ENCODE measurements at regions of chr1 and their contacts with region 1.

Region 1: DNA sequence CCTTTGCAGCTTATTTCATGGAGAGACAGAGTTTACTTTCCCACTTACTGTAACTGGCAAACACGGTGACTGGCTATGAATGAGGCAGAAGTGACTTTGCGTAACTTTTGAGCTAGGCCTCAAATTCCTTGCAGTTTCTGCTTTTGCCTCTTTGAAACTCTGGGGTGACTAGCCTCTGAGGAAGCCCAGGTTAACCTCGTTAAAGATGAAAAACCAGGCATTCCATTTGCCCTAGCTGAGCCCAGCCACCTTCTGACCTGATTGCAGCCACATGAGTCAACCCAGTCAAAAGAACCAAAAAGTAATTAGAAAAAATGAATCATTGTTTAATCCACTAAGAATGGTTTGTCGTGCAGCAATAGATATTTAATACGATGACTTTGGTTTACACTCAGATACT is 20.4 kb downstream of the PRMT6 start:
- DNase-seq: peak; percentile 94
- H3K4me3 ChIP-seq: no peak overlapping the region
- H3K27ac ChIP-seq: peak overlapping the region; percentile 29
- H3K4me1 ChIP-seq: peaks cover 7% of the 10 kb centered on the region
- H3K27me3 ChIP-seq: peaks cover 2% of the 10 kb centered on the region
- CTCF ChIP-seq: no peak

Region 2: DNA sequence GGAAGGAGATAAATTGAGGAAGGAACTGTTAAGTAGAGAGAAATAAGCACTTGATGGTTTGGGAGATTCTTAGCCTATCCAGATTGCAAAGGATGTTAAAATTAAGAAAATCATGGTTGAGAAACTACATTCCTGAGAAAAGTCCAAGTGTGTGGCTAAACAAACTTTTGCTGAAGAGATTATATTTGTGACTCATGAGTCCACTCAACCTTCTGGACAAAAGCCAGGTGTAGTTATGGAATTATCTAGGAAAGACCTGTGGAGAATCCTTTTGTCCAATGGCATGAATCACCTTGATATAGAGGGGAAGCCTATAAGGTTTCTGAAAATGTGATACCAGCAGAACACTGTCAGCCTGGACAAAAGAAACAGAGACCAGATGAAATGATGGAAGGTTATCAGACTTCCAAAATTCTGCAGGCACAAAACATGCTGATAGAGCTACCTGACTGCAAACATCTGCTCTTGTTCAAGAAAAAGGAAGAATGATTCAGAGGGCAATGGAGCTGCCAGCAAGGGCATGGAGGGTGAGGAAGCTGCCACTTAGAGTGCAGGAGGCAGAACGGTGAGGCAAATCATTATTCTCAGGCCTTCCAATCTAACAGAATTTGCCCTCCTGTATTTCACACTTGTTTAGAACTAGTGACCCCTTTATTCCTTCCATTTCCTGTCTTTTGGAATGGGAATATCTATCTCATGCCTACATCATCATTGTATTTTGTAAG is 321.0 kb before region 1 on chr1:
- CTCF ChIA-PET with region 1: no interaction called
- dilution Hi-C with region 1: no loop called
- in situ Hi-C with region 1: no loop called
- intact Hi-C with region 1: no loop called
- DNase-seq: peak; percentile 71
- H3K4me3 ChIP-seq: no peak overlapping the region
- H3K27ac ChIP-seq: no peak overlapping the region
- H3K4me1 ChIP-seq: peaks cover 7% of the 10 kb centered on the region
- H3K27me3 ChIP-seq: peaks cover 4% of the 10 kb centered on the region
- CTCF ChIP-seq: no peak

Region 3: DNA sequence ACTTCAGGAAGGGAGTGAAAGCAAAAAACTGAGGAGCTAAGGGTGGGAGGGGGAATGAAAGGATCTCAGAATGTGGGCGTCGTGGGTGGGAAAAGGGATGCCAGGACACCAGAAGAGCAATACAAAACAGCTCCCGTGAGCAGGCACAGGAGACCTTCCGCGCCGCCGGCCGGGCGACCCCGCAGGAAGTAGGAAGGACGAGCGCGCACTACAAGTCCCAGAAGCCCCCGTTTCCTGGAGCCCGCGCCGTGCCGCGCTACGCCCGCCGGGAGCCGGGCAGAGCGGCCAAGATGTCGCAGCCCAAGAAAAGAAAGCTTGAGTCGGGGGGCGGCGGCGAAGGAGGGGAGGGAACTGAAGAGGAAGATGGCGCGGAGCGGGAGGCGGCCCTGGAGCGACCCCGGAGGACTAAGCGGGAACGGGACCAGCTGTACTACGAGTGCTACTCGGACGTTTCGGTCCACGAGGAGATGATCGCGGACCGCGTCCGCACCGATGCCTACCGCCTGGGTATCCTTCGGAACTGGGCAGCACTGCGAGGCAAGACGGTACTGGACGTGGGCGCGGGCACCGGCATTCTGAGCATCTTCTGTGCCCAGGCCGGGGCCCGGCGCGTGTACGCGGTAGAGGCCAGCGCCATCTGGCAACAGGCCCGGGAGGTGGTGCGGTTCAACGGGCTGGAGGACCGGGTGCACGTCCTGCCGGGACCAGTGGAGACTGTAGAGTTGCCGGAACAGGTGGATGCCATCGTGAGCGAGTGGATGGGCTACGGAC is 20.2 kb before region 1 on chr1 and contains the start of gene PRMT6:
- CTCF ChIA-PET with region 1: interaction called, 4 read pairs
- dilution Hi-C with region 1: no loop called
- in situ Hi-C with region 1: no loop called
- intact Hi-C with region 1: loop called (anchors 2 kb)
- DNase-seq: peak; percentile 69
- H3K4me3 ChIP-seq: peak within 1 kb of the TSS; percentile 87 to 99 (median 96)
- H3K27ac ChIP-seq: peak within 1 kb of the TSS; percentile 61
- H3K4me1 ChIP-seq: peaks cover 9% of the 10 kb centered on the region
- H3K27me3 ChIP-seq: no peaks in the 10 kb centered on the region
- CTCF ChIP-seq: peak in 1 of 2 donors; percentile 11
- total RNA-seq, gene PRMT6: 14.4 to 17.7 TPM

Region 4: DNA sequence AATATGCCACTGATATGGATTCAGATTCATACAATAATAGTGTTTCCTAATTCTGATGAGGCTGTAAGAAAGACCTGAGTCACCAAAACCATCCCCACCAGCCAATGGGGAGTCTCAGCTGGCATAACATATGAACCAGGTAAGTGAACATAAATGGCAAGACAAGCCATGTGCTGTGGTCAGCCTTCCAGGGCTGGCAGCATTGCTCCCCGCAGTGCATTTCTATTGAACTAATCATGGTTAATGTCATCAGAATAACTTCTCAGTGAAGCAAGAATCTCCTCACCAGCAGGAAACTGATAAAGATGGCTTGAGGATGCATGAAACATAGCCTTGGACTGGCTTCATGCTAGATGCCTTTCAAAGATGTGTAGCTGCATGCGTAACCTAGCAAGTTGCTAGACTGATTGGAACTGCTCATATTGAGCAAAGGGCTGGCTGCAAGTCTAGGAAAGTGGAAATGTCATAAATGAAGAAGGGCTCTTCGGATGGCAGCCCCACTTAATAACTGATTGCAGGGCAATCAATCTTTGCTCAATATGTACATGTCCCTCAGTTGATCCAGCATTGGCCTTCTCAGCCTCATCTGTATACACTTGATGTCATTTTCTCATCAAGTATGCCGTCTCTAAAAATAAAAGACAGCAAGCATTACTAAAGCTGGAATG is 152.0 kb after region 1 on chr1:
- CTCF ChIA-PET with region 1: no interaction called
- dilution Hi-C with region 1: no loop called
- in situ Hi-C with region 1: no loop called
- intact Hi-C with region 1: no loop called
- DNase-seq: peak; percentile 93
- H3K4me3 ChIP-seq: no peak overlapping the region
- H3K27ac ChIP-seq: no peak overlapping the region
- H3K4me1 ChIP-seq: peaks cover 5% of the 10 kb centered on the region
- H3K27me3 ChIP-seq: no peaks in the 10 kb centered on the region
- CTCF ChIP-seq: no peak